ENCODE measurements at regions of chr7 and their contacts with region 1.

Region 1: GRCh38 chr7:51141451-51142003 is 175.1 kb downstream of the COBL start:
- DNase-seq: no peak
- ATAC-seq: peak; percentile 50 to 78

Region 2: DNA sequence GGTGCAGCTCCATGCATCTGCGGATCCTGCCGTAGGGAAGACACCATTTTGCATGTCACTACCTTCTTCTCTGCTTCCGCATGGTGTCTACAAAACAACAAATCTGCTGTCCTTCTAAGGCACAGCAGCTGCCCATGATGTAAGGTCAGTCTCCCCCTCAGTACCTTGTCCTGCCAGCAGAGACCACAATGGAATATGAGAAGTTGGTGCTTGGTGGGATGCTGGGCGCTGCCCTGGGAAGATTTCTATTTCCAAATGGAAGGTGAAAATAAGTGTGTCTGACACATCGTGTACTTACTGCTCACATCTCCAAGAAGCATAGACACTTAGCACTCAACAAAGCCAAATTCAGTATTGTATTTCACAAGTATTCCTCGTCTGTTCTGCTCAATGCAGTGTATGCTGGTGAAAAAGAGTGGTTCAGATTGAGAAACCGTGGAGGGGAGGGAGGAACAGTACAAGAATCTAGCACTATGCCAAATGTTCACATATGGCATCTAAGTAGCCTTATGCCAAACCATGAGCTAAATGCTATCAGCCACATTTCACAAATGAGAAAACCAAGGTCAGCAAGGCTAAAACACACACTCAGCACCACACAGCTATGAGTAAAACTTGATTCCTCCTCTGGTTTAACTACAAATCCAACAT is 453.8 kb before region 1 on chr7:
- intact Hi-C with region 1: loop called in 1 of 2 experiments (anchors 5 kb)
- DNase-seq: no peak
- ATAC-seq: peak; percentile 48 to 68

Region 3: DNA sequence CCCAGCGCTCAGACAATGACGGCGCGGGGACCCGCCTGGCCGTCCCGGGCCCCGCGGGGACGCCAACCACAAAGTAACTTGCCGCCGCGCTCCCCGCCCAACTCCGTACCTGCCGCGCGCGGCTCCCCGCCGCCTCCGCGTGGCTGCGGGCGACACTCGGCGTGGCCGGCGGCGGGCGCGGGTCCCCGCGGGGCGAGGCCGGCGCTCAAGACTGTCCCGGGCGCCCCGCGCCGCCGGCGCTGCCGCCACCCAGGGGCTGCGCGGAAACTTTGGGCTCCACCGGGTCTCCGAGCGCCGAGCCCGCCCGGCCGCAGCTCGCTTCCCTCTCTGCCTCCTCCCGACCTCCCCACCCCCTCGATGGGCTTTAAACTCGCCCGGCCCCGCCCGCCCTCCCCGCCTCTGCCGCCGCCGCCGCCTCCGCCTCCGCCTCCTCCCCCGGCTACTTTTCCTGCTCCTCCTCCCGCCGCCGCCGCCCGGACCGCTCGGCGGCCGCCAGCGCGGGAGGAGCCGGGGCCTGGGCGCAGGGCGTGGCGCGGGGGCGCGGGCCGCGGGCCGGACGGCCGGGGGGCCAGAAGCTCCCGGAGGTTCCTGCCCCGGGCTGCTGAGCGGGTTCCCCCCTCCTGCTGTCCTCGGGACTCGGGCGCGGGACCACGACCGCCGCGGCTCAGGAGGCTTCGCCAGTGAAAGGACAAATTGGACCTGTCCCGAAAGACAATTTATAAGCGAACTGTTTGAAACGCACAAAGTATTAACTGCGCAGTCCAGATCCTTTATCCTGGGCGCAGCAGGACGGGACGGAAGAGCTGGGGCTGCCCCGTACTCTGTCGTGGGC is 348.2 kb before region 1 on chr7:
- intact Hi-C with region 1: loop called (anchors 5 to 10 kb)
- DNase-seq: peak; percentile 84
- ATAC-seq: peak; percentile 89 to 90

Measured in left cardiac atrium (tissue), 4 donors.